ENCODE measurements at regions of chr16 and their contacts with region 1.

Region 1: DNA sequence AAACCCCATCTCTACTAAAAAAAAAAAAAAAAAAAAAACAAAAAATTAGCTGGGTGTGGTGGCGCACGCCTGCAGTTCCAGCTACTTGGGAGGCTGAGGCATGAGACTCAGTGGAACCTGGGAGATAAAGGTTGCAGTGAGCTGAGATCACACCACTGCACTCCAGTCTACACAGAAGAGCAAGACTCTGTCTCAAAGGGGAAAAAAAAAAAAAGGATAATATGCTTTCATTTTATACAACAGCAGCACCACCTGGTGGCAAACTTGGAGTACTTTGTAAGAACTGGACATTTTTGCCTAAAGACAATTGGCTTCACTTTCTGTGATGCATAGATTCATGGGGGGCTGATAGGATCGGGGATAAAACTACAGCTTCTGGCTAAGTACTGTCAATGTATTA is 8.5 kb downstream of the CHTF8 start:
- DNase-seq: peak; percentile 75 to 89 (median 84)
- H3K4me3 ChIP-seq: no peak overlapping the region
- H3K27ac ChIP-seq: no peak overlapping the region
- H3K4me1 ChIP-seq: no peaks in the 10 kb centered on the region
- H3K27me3 ChIP-seq: no peaks in the 10 kb centered on the region

Region 2: DNA sequence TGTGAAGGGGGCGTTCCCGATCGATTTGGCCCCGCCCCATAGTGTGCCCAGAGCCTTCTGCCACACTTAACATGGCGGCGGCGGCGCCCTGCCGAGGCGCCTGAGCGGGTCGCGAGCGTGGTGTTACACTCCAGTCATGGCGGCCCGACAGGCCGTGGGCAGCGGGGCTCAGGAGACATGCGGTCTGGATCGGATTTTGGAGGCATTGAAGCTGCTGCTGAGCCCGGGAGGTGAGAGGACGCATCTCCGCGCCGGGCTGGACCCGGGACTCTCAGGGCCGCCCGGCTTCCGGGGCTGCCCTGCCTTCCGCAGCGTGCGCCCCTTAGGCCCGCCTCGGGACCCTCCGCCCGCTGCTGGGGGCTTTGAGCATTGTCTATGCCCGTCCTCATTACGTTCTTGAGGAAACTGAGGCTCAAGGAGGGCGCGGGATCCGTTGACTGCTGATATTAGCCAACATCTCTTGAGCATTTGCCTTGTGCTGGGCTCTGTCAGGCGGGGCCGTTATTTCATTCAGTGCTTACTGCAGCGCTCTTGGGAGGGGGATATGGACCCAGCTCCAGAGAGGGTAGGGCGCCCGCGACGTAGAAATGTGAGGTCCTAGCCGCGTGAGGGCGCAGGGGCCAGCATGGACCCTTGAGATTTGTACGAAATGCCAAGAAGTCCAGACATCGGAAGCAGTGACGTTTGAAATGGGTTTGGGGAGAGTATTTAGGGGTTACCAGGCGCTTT is 280.3 kb before region 1 on chr16 and contains the start of gene TANGO6:
- CTCF ChIA-PET with region 1: interaction called, 31 read pairs
- POLR2A ChIA-PET with region 1: no interaction called
- DNase-seq: peak; percentile 86 to 90 (median 87)
- H3K4me3 ChIP-seq: peak within 1 kb of the TSS; percentile 84 to 99 (median 90)
- H3K27ac ChIP-seq: peak within 1 kb of the TSS in 1 of 2 experiments; percentile 81
- H3K4me1 ChIP-seq: peaks cover 3 to 11% (median 7%) of the 10 kb centered on the region in 4 experiments
- H3K27me3 ChIP-seq: peaks cover 0 to 19% (median 0%) of the 10 kb centered on the region in 5 experiments

Region 3: GRCh38 chr16:68995011-68995504 is 128.9 kb before region 1 on chr16:
- CTCF ChIA-PET with region 1: interaction called, 10 read pairs
- POLR2A ChIA-PET with region 1: no interaction called
- DNase-seq: peak; percentile 29 to 56 (median 51)
- H3K4me3 ChIP-seq: no peak overlapping the region
- H3K27ac ChIP-seq: no peak overlapping the region
- H3K4me1 ChIP-seq: no peaks in the 10 kb centered on the region
- H3K27me3 ChIP-seq: no peaks in the 10 kb centered on the region

Region 4: DNA sequence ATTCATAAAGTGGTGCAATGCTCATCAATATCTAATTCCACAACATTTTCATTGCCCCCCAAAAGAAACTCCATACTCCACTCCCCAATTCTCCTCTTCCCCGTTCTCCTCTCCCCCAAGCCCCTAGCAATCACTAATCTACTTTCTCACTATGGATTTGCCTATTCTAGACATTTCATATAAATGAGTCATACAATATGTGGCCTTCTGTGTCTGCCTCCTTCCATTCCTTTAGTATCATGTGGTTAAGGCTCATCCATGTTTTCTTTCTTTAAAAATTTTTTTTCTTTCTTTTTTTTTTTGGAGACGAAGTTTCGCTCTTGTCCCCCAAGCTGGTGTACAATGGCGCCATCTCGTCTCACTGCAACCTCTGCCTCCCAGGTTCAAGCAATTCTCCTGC is 74.8 kb before region 1 on chr16:
- CTCF ChIA-PET with region 1: no interaction called
- POLR2A ChIA-PET with region 1: no interaction called
- DNase-seq: no peak
- H3K4me3 ChIP-seq: no peak overlapping the region
- H3K27ac ChIP-seq: no peak overlapping the region
- H3K4me1 ChIP-seq: no peaks in the 10 kb centered on the region
- H3K27me3 ChIP-seq: no peaks in the 10 kb centered on the region

Region 5: GRCh38 chr16:69105489-69106361 is 18.2 kb before region 1 on chr16 and contains the start of gene HAS3:
- CTCF ChIA-PET with region 1: interaction called, 71 read pairs
- POLR2A ChIA-PET with region 1: no interaction called
- DNase-seq: peak; percentile 38 to 67 (median 63)
- H3K4me3 ChIP-seq: peak within 1 kb of the TSS; percentile 26 to 74 (median 64)
- H3K27ac ChIP-seq: no peak within 1 kb of the TSS
- H3K4me1 ChIP-seq: peaks cover 0 to 31% (median 26%) of the 10 kb centered on the region in 4 experiments
- H3K27me3 ChIP-seq: peaks cover 0 to 57% (median 12%) of the 10 kb centered on the region in 5 experiments

Region 6: DNA sequence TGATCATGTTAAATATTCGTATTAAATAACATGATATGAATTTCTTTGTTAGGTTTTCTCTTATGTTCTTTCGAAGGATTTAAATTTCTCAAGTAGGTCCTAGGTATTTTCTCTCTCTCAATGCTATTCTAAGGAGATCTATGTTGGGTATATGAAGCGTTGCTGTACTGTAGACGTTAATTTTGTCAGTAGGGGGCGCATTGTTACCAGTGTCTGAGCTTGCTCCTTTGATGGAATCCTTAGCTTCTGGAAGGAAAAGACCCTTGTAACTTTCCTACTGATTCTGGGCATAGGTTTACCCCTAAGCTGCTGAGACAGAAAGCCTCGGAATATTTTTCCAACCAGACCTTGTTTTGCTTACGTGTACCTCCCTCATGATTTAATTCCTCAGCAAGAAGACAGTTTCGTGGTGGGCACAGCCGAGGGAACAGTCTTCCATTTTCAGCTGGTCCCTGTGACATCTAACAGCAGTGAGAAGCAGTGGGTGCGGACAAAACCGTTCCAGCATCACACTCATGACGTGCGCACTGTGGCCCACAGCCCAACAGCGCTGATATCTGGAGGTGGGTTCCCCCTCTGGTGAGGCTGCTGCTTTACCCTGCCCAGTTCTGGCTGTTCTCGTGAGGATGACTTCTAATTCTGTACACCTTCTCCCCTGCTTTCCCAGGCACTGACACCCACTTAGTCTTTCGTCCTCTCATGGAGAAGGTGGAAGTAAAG is 26.4 kb after region 1 on chr16:
- CTCF ChIA-PET with region 1: no interaction called
- POLR2A ChIA-PET with region 1: no interaction called
- DNase-seq: peak; percentile 69 to 81 (median 74)
- H3K4me3 ChIP-seq: no peak overlapping the region
- H3K27ac ChIP-seq: no peak overlapping the region
- H3K4me1 ChIP-seq: no peaks in the 10 kb centered on the region
- H3K27me3 ChIP-seq: no peaks in the 10 kb centered on the region

Measured in common myeloid progenitor, CD34-positive (primary cell).